Left ventricle myocardium inferior (tissue), 1 donor: ENCODE measurements at regions of chr16 and their contacts with region 1.

Region 1: DNA sequence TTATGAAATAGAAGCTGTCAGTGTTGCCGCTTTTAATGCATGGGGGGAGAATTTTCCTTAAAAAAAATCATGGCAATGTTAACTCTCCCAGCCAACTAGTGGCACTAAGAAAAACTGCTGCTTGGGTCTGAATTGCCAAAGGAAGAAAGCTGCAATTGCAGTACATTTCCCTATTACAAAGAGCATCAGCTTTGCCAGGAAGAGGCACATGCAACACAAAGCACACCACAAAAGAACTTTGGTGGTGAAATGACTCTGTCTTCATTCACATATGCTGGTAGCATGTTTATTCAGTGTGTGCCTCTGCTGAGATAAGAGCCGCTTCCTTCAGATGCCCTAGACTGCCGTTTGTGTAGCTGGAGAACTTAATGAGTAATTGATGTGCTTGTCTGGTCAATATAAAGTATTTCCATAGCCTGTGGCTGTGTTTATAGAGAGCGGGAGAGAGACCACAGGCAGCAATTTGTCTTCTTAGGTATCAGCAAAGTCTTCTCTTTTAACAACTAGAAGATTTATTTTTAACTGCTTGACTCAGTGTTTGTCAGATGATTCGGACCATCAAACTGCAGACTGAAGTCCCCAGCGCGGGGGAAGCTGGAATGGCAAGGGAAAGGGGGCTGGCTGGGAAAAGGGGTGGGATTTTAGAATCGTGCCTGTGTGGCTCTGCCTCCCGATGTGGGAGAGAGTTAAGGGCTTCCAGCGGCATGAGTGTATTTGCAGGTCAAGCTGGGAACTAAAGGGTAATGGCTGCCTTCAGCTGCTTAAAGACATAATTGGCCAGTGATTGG is 115.1 kb downstream of the MRTFB start:
- DNase-seq: peak; percentile 31
- H3K4me3 ChIP-seq: peak overlapping the region; percentile 62
- H3K27ac ChIP-seq: peak overlapping the region; percentile 83
- H3K4me1 ChIP-seq: peaks cover 96% of the 10 kb centered on the region
- H3K27me3 ChIP-seq: no peaks in the 10 kb centered on the region
- CTCF ChIP-seq: peak; percentile 65

Region 2: DNA sequence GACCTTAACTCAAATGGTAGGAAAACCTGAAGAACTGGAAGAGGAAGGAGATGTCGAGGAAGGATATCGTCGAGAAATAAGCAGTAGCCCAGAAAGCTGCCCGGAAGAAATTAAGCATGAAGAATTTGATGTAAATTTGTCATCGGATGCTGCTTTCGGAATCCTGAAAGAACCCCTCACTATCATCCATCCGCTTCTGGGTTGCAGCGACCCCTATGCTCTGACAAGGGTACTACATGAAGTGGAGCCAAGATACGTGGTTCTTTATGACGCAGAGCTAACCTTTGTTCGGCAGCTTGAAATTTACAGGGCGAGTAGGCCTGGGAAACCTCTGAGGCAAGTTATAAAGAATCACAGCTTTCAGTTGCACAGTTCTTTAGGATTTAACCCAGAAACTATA is 250.8 kb before region 1 on chr16:
- intact Hi-C with region 1: loop called (anchors 10 kb)
- DNase-seq: no peak
- H3K4me3 ChIP-seq: no peak overlapping the region
- H3K27ac ChIP-seq: no peak overlapping the region
- H3K4me1 ChIP-seq: peaks cover 20% of the 10 kb centered on the region
- H3K27me3 ChIP-seq: no peaks in the 10 kb centered on the region
- CTCF ChIP-seq: peak; percentile 50

Region 3: GRCh38 chr16:14013571-14014282 is 172.5 kb before region 1 on chr16:
- intact Hi-C with region 1: loop called (anchors 10 kb)
- DNase-seq: no peak
- H3K4me3 ChIP-seq: peak overlapping the region; percentile 1
- H3K27ac ChIP-seq: peak overlapping the region; percentile 80
- H3K4me1 ChIP-seq: peaks cover 54% of the 10 kb centered on the region
- H3K27me3 ChIP-seq: no peaks in the 10 kb centered on the region
- CTCF ChIP-seq: no peak

Region 4: GRCh38 chr16:14121142-14121541 is 65.1 kb before region 1 on chr16:
- intact Hi-C with region 1: no loop called
- DNase-seq: no peak
- H3K4me3 ChIP-seq: no peak overlapping the region
- H3K27ac ChIP-seq: no peak overlapping the region
- H3K4me1 ChIP-seq: peaks cover 30% of the 10 kb centered on the region
- H3K27me3 ChIP-seq: no peaks in the 10 kb centered on the region
- CTCF ChIP-seq: no peak

Region 5: DNA sequence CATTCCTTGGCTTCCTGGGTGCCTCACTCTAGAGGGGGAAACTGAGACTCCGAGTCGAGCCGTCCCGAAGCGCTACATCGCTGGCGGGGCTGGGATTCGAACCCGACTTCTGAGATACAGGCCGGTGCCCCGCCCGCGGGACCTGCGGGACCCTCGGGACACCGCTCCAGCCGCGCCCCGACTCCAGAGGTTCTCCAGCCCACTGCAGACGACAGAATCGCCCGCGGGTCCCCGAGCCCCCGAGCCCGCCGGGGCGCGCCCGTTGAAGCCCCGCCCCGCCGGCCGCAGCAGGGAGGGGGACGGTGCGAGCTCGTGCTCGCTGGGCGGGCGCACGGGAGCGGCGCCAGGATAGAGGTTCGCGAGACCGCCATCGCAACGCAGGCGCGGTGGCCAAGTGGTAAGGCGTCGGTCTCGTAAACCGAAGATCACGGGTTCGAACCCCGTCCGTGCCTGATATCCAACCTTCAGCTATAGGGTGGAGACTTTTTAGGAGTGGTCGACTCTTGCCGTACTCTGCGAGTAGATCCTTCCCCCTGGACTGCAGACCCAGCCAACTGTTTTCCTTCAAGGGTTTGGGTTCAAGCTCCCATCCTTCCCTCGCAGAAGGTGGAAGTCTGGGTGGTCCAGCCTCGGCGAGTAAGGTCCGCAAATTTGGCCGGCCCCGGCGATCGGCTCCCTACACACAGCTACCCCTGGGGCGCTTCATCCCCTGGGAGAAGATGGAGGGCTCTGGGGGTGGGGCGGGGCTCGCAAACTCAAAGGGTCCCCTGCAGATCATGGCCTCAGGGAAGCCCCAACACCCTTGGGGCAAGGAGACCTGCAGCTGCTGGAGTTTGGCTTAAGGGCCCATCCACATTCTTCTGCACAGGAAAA is 99.5 kb after region 1 on chr16:
- intact Hi-C with region 1: no loop called
- DNase-seq: peak; percentile 93
- H3K4me3 ChIP-seq: peak overlapping the region; percentile 89
- H3K27ac ChIP-seq: peak overlapping the region; percentile 89
- H3K4me1 ChIP-seq: peaks cover 21% of the 10 kb centered on the region
- H3K27me3 ChIP-seq: no peaks in the 10 kb centered on the region
- CTCF ChIP-seq: no peak